Right lobe of liver (tissue), 6 donors: ENCODE measurements at regions of chr10 and their contacts with region 1.

Region 1: GRCh38 chr10:100194711-100195110 is 8.9 kb upstream of the ERLIN1 start:
- DNase-seq: no peak
- ATAC-seq: no peak
- H3K4me3 ChIP-seq: no peak overlapping the region
- H3K27ac ChIP-seq: no peak overlapping the region
- H3K4me1 ChIP-seq: no peaks in the 10 kb centered on the region
- H3K27me3 ChIP-seq: no peaks in the 10 kb centered on the region
- CTCF ChIP-seq: no peak
- POLR2A ChIP-seq: no peak

Region 2: DNA sequence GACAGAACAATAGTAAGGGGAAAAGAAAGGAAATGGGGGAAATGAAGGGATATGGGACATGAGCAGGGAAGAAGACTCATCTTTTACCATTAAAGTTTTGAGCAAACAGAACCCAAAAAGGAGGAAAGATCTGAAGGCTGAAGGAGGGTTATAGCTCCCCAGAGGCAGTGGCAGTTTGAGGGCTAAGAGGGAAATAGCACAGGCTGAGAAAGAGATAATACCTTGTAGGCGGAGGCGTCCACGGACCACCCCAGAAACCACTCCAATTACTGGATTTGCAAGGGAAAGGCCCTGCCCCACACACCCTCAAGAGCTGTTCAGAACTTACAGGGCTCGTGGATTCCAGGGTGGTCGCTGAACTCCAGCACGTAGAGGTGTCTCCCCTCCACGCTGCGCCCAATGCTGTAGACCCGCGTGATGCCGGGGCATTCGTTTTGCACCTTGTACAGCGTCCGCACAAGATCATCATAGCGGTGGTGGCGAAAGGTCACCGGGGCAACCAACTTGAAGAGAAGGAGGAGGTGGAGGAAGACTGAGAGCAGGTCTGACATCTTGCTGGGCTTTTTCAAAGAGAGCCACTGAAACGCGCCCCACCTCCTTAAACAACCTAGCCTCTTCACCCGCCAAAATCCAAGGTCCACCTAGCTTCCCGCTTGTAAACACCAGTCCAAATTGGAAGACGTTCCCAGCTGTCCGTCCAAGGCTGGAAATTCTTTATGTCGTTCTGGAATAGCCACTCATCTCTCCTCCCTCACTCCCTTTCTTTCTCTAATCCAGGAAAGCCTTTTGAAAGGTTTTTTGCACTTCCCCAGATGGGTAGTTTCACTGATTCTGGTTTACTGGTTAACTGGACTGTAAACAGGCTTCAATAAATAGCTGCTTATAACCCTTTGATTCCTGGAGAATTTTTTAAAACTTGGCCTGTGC is 113.4 kb before region 1 on chr10 and contains the start of gene CPN1:
- intact Hi-C with region 1: no loop called
- DNase-seq: peak; percentile 31 to 64 (median 62)
- ATAC-seq: peak; percentile 83 to 84 (median 84)
- H3K4me3 ChIP-seq: peak within 1 kb of the TSS; percentile 46 to 71 (median 69)
- H3K27ac ChIP-seq: peak within 1 kb of the TSS; percentile 9 to 95 (median 70)
- H3K4me1 ChIP-seq: peaks cover 0 to 7% (median 0%) of the 10 kb centered on the region in 4 donors
- H3K27me3 ChIP-seq: no peaks in the 10 kb centered on the region
- CTCF ChIP-seq: no peak
- POLR2A ChIP-seq: peak; percentile 78
- total RNA-seq, gene CPN1: 20.7 to 76.6 (median 54.4) TPM

Region 3: DNA sequence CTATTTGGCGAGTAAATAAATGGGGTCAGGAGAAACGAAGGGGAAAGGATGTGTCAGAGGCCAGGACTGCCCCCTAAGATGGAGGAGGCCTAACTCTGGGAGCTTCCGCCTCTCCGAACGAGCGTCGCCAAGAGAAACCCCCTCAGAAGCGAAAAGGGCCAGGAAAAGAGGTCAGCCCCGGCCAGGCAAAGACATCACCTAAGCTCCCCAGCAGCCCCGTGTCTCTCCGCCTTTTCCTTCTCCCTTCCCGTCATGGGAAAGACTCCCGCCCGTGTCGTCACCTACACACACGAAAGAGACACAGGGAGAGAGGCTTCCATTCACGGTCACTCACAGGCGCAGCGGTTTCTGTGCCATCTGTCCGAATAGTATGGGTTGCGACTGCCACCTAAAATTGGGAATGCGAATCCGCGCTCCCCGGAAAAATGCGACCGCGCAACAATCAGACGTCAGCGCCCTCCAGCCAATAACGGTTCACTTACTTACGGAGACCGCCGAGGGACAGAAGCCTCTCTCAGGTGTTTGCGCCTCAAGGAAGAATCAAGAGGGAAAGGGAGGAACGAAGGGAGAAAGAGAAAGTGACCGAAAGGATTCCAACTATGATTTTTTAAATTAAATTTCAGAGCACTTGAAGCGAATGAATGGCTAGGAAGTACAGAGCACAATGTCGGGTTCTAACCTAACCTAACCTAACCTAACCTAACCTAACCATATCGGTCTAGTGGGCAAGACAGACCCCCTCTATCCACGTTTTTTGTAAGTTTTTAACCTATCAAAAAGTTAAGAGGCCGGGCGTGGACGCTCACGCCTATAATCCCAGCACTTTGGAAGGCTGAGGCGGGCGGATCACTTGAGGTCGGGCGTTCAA is 72.8 kb after region 1 on chr10 and contains the start of gene CWF19L1:
- intact Hi-C with region 1: loop called in 1 of 2 experiments (anchors 5 kb)
- DNase-seq: peak; percentile 85 to 92 (median 89)
- ATAC-seq: peak; percentile 92 to 98 (median 96)
- H3K4me3 ChIP-seq: peak within 1 kb of the TSS; percentile 62 to 98 (median 86)
- H3K27ac ChIP-seq: peak within 1 kb of the TSS; percentile 47 to 72 (median 71)
- H3K4me1 ChIP-seq: peaks cover 0 to 9% (median 3%) of the 10 kb centered on the region in 4 donors
- H3K27me3 ChIP-seq: no peaks in the 10 kb centered on the region
- CTCF ChIP-seq: no peak
- POLR2A ChIP-seq: peak; percentile 51
- total RNA-seq, gene CWF19L1: 7.7 to 10.7 (median 8.4) TPM

Region 4: GRCh38 chr10:100705139-100705538 is 510.4 kb after region 1 on chr10:
- intact Hi-C with region 1: no loop called
- DNase-seq: no peak
- ATAC-seq: no peak
- H3K4me3 ChIP-seq: no peak overlapping the region
- H3K27ac ChIP-seq: no peak overlapping the region
- H3K4me1 ChIP-seq: peaks cover 0 to 3% (median 0%) of the 10 kb centered on the region in 4 donors
- H3K27me3 ChIP-seq: no peaks in the 10 kb centered on the region
- CTCF ChIP-seq: no peak
- POLR2A ChIP-seq: no peak